Psoas muscle (tissue), 8 donors: ENCODE measurements at regions of chr1 and their contacts with region 1.

Region 1: GRCh38 chr1:52601991-52602855 is at the start of gene GPX7:
- DNase-seq: peak; percentile 47 to 76
- ATAC-seq: peak; percentile 11 to 51 (median 22)
- H3K4me3 ChIP-seq: peak within 1 kb of the TSS; percentile 68
- H3K27ac ChIP-seq: peak within 1 kb of the TSS; percentile 94
- H3K4me1 ChIP-seq: peaks cover 47% of the 10 kb centered on the region
- H3K27me3 ChIP-seq: no peaks in the 10 kb centered on the region
- CTCF ChIP-seq: no peak
- total RNA-seq, gene GPX7: 5.6 to 12.2 (median 10.2) TPM

Region 2: DNA sequence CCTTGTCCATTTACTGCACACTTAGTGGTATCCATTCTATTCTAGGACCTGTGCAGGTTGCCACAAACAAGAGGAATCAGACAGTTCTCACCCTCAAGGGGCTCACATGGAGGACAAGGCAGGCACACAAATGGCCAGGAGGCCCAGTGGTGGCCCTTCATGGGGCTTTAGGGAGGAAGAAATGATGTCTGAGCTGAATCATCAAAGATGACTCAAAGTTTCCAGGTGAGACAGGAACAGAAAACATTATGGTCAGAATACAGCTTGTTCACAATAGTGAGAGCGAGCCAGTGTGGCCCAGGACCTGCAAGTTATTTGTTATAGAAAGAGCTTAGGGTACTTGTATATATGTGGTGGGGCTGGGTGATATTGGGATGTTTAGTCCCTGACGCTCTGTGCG is 57.1 kb after region 1 on chr1:
- intact Hi-C with region 1: loop called in 1 of 2 experiments (anchors 5 kb)
- DNase-seq: no peak
- ATAC-seq: peak in 3 of 4 donors; percentile 1 to 2 (median 2)
- H3K4me3 ChIP-seq: no peak overlapping the region
- H3K27ac ChIP-seq: peak overlapping the region; percentile 16
- H3K4me1 ChIP-seq: no peaks in the 10 kb centered on the region
- H3K27me3 ChIP-seq: no peaks in the 10 kb centered on the region
- CTCF ChIP-seq: no peak

Region 3: GRCh38 chr1:52674497-52675384 is 72.5 kb after region 1 on chr1:
- intact Hi-C with region 1: loop called in 1 of 2 experiments (anchors 5 kb)
- DNase-seq: no peak
- ATAC-seq: no peak
- H3K4me3 ChIP-seq: no peak overlapping the region
- H3K27ac ChIP-seq: peak overlapping the region; percentile 84
- H3K4me1 ChIP-seq: peaks cover 42% of the 10 kb centered on the region
- H3K27me3 ChIP-seq: no peaks in the 10 kb centered on the region
- CTCF ChIP-seq: no peak